ENCODE measurements at regions of chrX and their contacts with region 1.

Region 1: DNA sequence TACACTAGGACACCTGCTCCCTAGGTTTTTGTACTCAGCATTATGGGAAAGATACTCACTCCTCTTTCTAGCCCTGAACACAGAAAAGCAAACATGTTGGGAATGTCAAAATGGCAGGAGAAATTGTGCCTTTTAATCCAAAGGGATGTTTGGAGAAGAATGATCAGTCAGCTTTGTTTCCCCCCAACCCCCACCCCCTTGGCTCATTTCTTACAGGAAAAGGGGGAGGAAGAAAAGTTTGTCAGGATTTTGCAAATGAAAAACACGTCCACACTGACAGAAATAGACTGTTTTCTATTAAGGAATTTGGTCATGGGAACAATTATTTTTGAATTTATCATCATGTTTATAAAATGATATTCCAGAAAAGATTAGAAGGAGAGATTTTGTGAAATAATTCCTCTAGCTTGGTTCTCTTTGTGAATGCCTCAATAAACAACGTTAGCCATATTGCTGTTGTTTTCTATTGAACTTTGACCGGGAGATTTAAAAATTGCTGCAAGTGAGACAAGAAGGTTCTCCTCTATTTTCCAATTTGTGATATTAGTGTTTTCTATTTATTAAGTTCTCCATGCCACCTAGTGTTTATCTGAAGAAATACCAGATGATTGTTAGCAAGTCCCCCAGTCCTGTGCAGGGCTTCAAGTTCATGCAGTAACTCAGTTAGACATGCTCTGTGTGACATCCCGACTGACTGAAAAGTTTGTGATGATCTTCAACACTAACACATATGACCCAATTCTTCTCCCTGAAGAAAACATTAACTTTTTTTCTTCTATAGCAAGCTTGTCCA is 31.3 kb upstream of the TFDP3 start:
- DNase-seq: peak; percentile 44
- ATAC-seq: peak; percentile 53; the same call in 1 of the 2 replicates
- H3K4me3 ChIP-seq: no peak overlapping the region
- H3K27ac ChIP-seq: no peak overlapping the region
- H3K4me1 ChIP-seq: peaks cover 6% of the 10 kb centered on the region; the same call in 1 of the 2 replicates
- H3K27me3 ChIP-seq: no peaks in the 10 kb centered on the region
- CTCF ChIP-seq: peak; percentile 53

Region 2: DNA sequence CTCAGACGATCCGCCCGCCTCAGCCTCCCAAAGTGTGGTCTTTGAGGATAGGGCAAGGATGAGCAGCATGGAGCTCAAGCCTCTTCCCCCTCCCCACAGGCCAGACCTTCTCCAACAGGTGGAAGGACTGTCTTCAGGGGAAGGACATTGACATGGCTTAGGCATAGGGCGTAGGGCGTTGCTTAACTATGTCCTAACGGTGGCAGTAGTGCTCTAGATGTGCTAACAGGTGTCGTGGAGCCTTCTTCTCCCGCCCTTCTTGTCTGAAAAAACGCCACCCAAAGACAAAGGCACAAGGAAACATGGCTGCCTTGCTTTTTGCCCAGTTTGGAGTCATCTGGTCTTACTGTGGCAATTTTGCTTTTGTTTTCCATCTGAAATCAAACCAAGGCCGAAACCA is 1485.8 kb before region 1 on chrX:
- CTCF ChIA-PET with region 1: no interaction called
- POLR2A ChIA-PET with region 1: no interaction called
- intact Hi-C with region 1: loop called (anchors 10 kb)
- DNase-seq: peak; percentile 57
- ATAC-seq: peak; percentile 83
- H3K4me3 ChIP-seq: no peak overlapping the region
- H3K27ac ChIP-seq: no peak overlapping the region
- H3K4me1 ChIP-seq: no peaks in the 10 kb centered on the region
- H3K27me3 ChIP-seq: no peaks in the 10 kb centered on the region
- CTCF ChIP-seq: 0 out of 2 replicates have a peak, but pooled peaks have one; percentile 34

Region 3: DNA sequence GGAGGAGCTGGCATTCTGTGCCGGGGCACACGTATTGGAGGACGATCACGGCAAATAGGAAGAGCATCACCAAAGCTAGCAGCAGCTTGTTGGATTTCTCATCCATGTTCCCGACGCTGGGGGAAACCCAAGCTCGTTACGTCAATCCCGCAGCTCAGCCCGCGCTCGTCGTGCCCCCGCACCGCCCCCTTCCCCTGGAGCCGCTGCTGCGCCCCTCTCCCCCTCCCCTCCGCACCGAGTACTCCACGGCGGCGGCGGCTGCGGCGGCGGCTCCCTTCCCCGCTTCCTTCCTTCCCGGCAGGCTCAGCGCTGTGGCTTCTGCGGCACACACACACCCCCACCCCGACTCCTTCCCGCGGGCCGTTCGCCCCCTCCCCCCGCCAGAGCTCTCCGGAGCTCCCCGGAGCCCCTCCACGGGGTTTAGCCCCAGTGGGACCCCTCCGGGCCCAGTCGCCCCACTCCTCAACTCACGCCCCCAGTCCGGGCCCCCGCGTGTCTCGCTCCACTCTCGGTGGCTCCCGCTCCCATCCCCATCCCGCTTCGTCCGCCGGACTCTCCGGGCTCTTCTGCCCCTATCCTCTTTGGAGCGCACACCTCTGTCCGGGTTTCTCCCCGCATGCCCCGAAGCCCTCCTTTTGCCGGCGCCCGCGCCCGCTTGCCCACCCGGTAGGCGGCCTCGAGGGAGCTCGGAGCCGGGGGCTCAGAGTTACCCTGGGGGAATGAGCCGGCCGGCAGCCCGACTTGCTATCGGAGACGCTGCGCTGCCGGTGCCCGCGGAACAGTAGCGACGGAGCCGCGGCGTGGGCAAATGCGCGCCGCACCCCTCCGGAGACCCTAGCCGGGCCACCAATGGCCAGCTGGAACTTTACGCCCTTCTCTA is 292.0 kb before region 1 on chrX:
- CTCF ChIA-PET with region 1: no interaction called
- POLR2A ChIA-PET with region 1: no interaction called
- intact Hi-C with region 1: no loop called
- DNase-seq: no peak
- ATAC-seq: peak; percentile 25
- H3K4me3 ChIP-seq: peak overlapping the region; percentile 71
- H3K27ac ChIP-seq: no peak overlapping the region
- H3K4me1 ChIP-seq: peaks cover 54% of the 10 kb centered on the region
- H3K27me3 ChIP-seq: no peaks in the 10 kb centered on the region
- CTCF ChIP-seq: no peak

Region 4: GRCh38 chrX:133085785-133086184 is 163.7 kb before region 1 on chrX:
- CTCF ChIA-PET with region 1: no interaction called
- POLR2A ChIA-PET with region 1: no interaction called
- intact Hi-C with region 1: no loop called
- DNase-seq: peak; percentile 87
- ATAC-seq: peak; percentile 96
- H3K4me3 ChIP-seq: no peak overlapping the region
- H3K27ac ChIP-seq: peak overlapping the region; percentile 48
- H3K4me1 ChIP-seq: peaks cover 27% of the 10 kb centered on the region
- H3K27me3 ChIP-seq: no peaks in the 10 kb centered on the region
- CTCF ChIP-seq: no peak

Region 5: GRCh38 chrX:133171962-133172708 is 77.3 kb before region 1 on chrX:
- CTCF ChIA-PET with region 1: no interaction called
- POLR2A ChIA-PET with region 1: no interaction called
- intact Hi-C with region 1: loop called (anchors 1 kb)
- DNase-seq: peak; percentile 65
- ATAC-seq: peak; percentile 87
- H3K4me3 ChIP-seq: no peak overlapping the region
- H3K27ac ChIP-seq: no peak overlapping the region
- H3K4me1 ChIP-seq: peaks cover 12% of the 10 kb centered on the region
- H3K27me3 ChIP-seq: no peaks in the 10 kb centered on the region
- CTCF ChIP-seq: peak; percentile 78

Region 6: DNA sequence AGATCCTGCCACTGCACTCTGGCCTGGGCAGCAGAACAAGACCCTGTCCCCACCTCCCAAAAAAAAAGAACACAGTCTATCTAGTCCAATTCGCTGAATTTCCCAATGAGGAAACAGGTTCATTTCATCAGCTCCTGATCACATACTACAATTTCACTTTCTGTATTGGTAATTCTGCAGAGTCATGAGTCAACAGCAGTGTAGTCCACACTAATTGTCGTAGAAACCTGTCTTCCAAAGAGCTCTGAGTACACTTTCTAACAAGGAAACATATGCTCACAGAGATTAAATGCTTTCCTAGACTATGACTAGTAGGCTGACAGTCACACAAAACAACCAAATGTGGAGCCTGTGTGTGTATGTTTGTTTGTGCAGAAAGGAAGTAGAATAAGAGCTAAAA is 74.0 kb after region 1 on chrX:
- CTCF ChIA-PET with region 1: no interaction called
- POLR2A ChIA-PET with region 1: no interaction called
- intact Hi-C with region 1: loop called (anchors 10 kb)
- DNase-seq: no peak
- ATAC-seq: no peak
- H3K4me3 ChIP-seq: no peak overlapping the region
- H3K27ac ChIP-seq: no peak overlapping the region
- H3K4me1 ChIP-seq: peaks cover 11% of the 10 kb centered on the region; the same call in 1 of the 2 replicates
- H3K27me3 ChIP-seq: no peaks in the 10 kb centered on the region
- CTCF ChIP-seq: no peak

Region 7: DNA sequence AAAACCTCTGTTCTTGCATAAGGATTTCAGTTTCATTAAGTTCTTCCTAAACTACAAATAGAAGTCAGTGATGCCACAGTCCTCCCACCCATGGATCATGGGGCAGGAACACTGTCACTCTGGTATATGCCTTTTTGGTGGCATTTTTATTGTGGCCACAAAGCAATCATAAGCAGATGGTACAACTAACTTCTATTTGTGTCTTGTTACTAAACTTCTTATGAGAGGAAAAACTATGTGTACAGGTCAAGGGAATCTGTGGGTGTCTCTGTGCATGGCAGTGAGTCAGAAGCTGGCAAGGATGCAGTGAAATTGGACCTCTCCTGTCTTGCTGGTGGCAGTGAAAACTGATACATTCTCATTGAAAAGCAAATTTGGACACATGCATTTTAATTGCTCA is 410.8 kb after region 1 on chrX:
- CTCF ChIA-PET with region 1: no interaction called
- POLR2A ChIA-PET with region 1: no interaction called
- intact Hi-C with region 1: loop called (anchors 10 kb)
- DNase-seq: peak; percentile 87
- ATAC-seq: peak; percentile 97
- H3K4me3 ChIP-seq: no peak overlapping the region
- H3K27ac ChIP-seq: peak overlapping the region; percentile 67
- H3K4me1 ChIP-seq: peaks cover 22% of the 10 kb centered on the region
- H3K27me3 ChIP-seq: no peaks in the 10 kb centered on the region
- CTCF ChIP-seq: no peak

Measured in PC-3 (cell line).